ENCODE measurements at regions of chr6 and their contacts with region 1.

Region 1: GRCh38 chr6:36885461-36886401 is at the start of gene C6orf89:
- DNase-seq: peak; percentile 91 to 99 (median 97)
- ATAC-seq: peak; percentile 98
- H3K4me3 ChIP-seq: peak within 1 kb of the TSS; percentile 75 to 78
- H3K4me3 Mint-ChIP-seq: peak within 1 kb of the TSS; percentile 91
- H3K27ac ChIP-seq: peak within 1 kb of the TSS; percentile 63 to 91
- H3K27ac Mint-ChIP-seq: peak within 1 kb of the TSS; percentile 94
- H3K4me1 ChIP-seq: peaks cover 14% of the 10 kb centered on the region
- H3K4me1 Mint-ChIP-seq: peaks cover 38% of the 10 kb centered on the region
- H3K27me3 ChIP-seq: no peaks in the 10 kb centered on the region
- H3K27me3 Mint-ChIP-seq: no peaks in the 10 kb centered on the region
- CTCF ChIP-seq: peak; percentile 81
- total RNA-seq, gene C6orf89: 22.2 TPM

Region 2: GRCh38 chr6:36542041-36542440 is 343.7 kb before region 1 on chr6:
- CTCF ChIA-PET with region 1: no interaction called
- POLR2A ChIA-PET with region 1: no interaction called
- intact Hi-C with region 1: loop called in 1 of 2 experiments (anchors 2 kb)
- DNase-seq: no peak
- ATAC-seq: no peak
- H3K4me3 ChIP-seq: peak overlapping the region in 1 of 2 experiments; percentile 8
- H3K4me3 Mint-ChIP-seq: peak overlapping the region; percentile 66
- H3K27ac ChIP-seq: peak overlapping the region in 1 of 2 experiments; percentile 41
- H3K27ac Mint-ChIP-seq: peak overlapping the region; percentile 88
- H3K4me1 ChIP-seq: peaks cover 57% of the 10 kb centered on the region
- H3K4me1 Mint-ChIP-seq: peaks cover 64% of the 10 kb centered on the region
- H3K27me3 ChIP-seq: no peaks in the 10 kb centered on the region
- H3K27me3 Mint-ChIP-seq: no peaks in the 10 kb centered on the region
- CTCF ChIP-seq: no peak

Region 3: DNA sequence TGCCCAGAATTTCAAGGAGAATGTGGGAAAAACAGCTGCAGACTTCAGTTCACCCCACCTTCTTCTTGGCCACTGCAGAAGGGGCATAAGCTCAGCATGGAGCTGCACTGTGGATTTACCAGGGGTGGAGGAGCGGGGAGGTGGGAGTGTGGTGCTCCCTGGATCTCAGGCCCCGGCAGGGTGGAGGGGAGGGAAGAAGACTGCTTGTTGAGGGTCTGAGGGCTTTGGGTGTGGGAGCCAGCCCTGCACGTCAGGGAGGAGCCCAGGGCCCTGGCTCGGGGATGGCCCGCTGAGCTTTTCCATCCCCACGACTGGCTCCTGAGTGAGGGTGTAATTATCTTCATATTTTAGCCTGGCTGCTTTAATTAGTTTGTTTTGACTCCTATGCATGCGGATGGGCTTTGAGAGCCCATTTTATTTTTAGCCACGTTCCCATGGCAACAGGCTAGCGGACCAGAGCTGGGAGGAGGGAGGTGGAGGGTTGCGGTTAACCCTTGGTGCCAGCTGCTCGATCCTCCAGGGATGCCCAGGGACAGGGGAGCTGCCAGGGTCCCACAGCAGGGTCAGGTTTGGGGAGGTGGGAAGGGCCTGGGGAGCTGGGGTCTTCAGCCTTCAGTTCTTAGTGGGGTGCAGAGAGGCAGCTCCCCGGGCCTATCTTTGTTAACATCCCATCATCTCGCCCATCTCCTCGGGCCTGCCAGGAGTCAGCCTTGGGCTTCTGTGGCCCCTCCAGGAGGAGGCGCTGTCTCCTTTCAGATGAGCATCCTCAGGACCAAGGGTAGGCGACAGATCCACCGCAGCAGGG is 119.9 kb before region 1 on chr6:
- CTCF ChIA-PET with region 1: interaction called, 4 read pairs
- POLR2A ChIA-PET with region 1: no interaction called
- intact Hi-C with region 1: loop called in 1 of 2 experiments (anchors 1 kb)
- DNase-seq: peak; percentile 65 to 87 (median 80)
- ATAC-seq: peak; percentile 95
- H3K4me3 ChIP-seq: no peak overlapping the region
- H3K4me3 Mint-ChIP-seq: no peak overlapping the region
- H3K27ac ChIP-seq: no peak overlapping the region
- H3K27ac Mint-ChIP-seq: no peak overlapping the region
- H3K4me1 ChIP-seq: peaks cover 42% of the 10 kb centered on the region
- H3K4me1 Mint-ChIP-seq: peaks cover 33% of the 10 kb centered on the region
- H3K27me3 ChIP-seq: no peaks in the 10 kb centered on the region
- H3K27me3 Mint-ChIP-seq: no peaks in the 10 kb centered on the region
- CTCF ChIP-seq: peak; percentile 75

Region 4: GRCh38 chr6:36912586-36912985 is 26.9 kb after region 1 on chr6:
- CTCF ChIA-PET with region 1: interaction called, 7 read pairs
- POLR2A ChIA-PET with region 1: no interaction called
- intact Hi-C with region 1: loop called (anchors 1 to 2 kb)
- DNase-seq: peak; percentile 3 to 82 (median 48)
- ATAC-seq: peak; percentile 85
- H3K4me3 ChIP-seq: peak overlapping the region; percentile 15 to 16
- H3K4me3 Mint-ChIP-seq: peak overlapping the region; percentile 63
- H3K27ac ChIP-seq: peak overlapping the region; percentile 13 to 70
- H3K27ac Mint-ChIP-seq: peak overlapping the region; percentile 83
- H3K4me1 ChIP-seq: peaks cover 20% of the 10 kb centered on the region
- H3K4me1 Mint-ChIP-seq: peaks cover 26% of the 10 kb centered on the region
- H3K27me3 ChIP-seq: no peaks in the 10 kb centered on the region
- H3K27me3 Mint-ChIP-seq: no peaks in the 10 kb centered on the region
- CTCF ChIP-seq: no peak

Region 5: GRCh38 chr6:36979347-36979742 is 93.6 kb after region 1 on chr6:
- CTCF ChIA-PET with region 1: interaction called, 7 read pairs
- POLR2A ChIA-PET with region 1: no interaction called
- intact Hi-C with region 1: loop called (anchors 1 kb)
- DNase-seq: peak in 4 of 9 experiments; percentile 33 to 66 (median 54)
- ATAC-seq: peak; percentile 78
- H3K4me3 ChIP-seq: no peak overlapping the region
- H3K4me3 Mint-ChIP-seq: no peak overlapping the region
- H3K27ac ChIP-seq: no peak overlapping the region
- H3K27ac Mint-ChIP-seq: peak overlapping the region; percentile 58
- H3K4me1 ChIP-seq: peaks cover 26% of the 10 kb centered on the region
- H3K4me1 Mint-ChIP-seq: peaks cover 25% of the 10 kb centered on the region
- H3K27me3 ChIP-seq: no peaks in the 10 kb centered on the region
- H3K27me3 Mint-ChIP-seq: no peaks in the 10 kb centered on the region
- CTCF ChIP-seq: peak; percentile 53